Mammary epithelial cell (primary cell): ENCODE measurements at regions of chr2 and their contacts with region 1.

Region 1: DNA sequence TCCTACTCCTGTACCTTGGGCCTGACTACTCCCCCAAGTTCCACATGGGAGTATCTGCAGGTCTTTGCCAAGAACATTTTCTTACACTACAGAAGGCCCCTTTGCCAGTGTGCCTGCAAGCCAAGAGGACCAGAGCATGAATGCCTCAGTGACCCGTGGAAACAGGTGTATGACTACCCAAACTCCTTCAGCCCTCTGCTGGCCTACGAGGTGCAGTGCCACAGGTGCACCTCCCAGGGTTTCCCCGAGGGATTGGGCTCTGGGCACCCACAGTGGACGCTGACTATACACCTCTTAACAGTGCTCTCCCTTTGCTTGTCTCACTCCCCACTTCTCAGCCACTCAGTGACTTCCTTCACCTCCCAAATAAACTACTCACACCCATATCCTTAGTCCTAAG is 91.4 kb downstream of the COL6A3 start:
- DNase-seq: no peak
- H3K4me3 ChIP-seq: no peak overlapping the region
- H3K27ac ChIP-seq: no peak overlapping the region
- H3K4me1 ChIP-seq: no peaks in the 10 kb centered on the region
- H3K27me3 ChIP-seq: no peaks in the 10 kb centered on the region
- CTCF ChIP-seq: peak; percentile 78

Region 2: DNA sequence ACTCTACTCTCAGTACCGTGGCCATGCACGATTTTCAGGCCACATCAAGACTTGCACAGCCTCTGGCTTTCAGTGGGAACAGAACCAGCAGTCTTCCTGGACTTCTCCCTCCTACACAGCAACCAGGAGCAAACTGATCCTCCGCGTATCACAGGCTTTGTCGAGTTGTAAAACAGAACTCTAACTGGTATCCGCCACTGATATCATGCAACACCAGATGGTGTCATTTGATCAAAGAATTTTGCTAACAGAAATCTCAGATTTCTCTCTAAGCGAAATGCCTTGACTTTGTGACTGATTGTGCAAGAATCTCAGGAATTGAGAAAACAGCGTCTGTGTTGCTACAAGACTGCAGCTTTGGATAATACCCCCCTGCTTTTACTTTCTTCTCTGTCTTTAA is 151.2 kb before region 1 on chr2:
- CTCF ChIA-PET with region 1: no interaction called
- dilution Hi-C with region 1: no loop called
- in situ Hi-C with region 1: no loop called
- intact Hi-C with region 1: loop called (anchors 1 kb)
- DNase-seq: peak; percentile 63
- H3K4me3 ChIP-seq: no peak overlapping the region
- H3K27ac ChIP-seq: no peak overlapping the region
- H3K4me1 ChIP-seq: peaks cover 2% of the 10 kb centered on the region
- H3K27me3 ChIP-seq: no peaks in the 10 kb centered on the region
- CTCF ChIP-seq: peak; percentile 22 to 44

Region 3: DNA sequence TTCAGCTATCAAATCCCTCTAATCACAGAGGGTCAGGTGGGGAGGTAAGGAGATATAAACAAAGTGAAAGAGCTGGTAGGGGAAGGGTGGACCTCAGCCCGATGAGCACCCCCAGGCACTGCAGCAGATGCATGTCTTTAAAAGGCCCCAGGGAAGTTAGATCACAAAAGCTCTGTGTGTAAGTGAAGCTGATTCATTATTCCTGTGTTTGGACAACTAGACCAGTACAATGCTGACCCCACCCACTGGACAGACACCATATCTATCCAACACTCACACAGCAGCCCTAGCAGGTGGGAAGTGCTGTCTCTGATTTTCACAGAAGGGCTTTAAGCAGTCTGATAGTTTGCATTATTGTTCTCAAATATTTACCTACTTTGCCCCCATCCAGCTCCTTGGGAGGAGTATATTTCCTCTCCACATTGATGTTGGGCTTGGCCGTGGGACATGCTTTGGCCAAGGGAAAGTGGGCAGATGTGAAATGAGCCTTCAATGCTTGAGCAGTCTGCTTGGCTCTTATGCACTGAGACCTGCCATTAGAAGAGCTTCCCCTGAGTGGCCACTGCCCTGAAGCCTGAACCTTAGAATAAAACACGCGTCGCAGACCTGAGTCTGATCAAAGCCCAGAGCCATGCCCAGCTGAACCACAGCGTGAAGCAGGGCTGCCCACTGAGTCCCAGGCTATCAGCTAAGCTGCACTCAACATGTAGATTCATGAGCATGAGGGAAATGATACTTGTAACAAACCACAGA is 125.5 kb before region 1 on chr2:
- CTCF ChIA-PET with region 1: interaction called, 16 read pairs
- dilution Hi-C with region 1: no loop called
- in situ Hi-C with region 1: no loop called
- intact Hi-C with region 1: no loop called
- DNase-seq: peak; percentile 77
- H3K4me3 ChIP-seq: no peak overlapping the region
- H3K27ac ChIP-seq: no peak overlapping the region
- H3K4me1 ChIP-seq: peaks cover 20% of the 10 kb centered on the region
- H3K27me3 ChIP-seq: no peaks in the 10 kb centered on the region
- CTCF ChIP-seq: no peak